ENCODE measurements at regions of chr3 and their contacts with region 1.

Region 1: DNA sequence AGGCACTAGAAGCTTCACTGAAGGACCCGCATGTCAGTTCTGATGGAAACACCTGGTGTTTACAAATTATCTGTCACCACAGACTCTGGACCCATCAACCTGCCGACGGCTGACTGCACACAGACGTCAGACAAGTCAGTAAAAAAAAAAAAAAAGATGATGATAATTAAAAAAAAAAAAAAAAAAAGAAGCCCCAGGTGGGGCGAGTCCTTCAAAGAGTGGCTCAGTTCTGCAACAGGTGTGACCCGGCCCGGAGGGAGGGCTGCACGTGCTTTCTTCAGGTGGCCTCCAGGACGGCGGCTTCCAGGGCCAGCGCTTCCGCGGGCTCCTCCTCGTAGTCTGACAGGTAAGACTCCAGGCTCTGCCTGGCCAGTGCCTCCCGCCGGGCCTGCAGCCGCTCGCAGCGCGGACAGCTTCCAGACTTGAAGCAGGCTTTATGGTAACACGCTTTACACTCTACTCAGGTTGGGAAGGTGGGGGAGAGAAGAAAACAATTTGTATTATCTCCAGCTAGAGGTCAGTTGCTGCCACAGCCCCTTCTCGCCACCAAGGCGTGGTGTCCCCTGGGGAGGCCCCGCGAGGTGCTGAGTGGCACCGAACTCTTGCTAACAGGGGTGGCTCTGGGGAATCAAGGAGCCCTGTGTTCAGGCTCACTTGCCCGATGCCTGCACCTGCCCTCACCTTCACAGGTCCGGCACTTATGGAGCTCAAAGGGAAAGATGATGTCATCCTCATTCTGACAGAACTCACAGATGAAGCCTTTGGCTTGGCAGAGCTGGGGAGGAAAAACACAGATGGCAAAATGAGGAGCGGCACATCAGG is 61.8 kb downstream of the RUBCN start:
- DNase-seq: peak in 1 of 2 donors; percentile 66
- ATAC-seq: no peak
- H3K4me3 ChIP-seq: no peak overlapping the region
- H3K27ac ChIP-seq: no peak overlapping the region
- H3K4me1 ChIP-seq: no peaks in the 10 kb centered on the region
- H3K27me3 ChIP-seq: no peaks in the 10 kb centered on the region

Region 2: GRCh38 chr3:197151569-197151968 is 523.4 kb before region 1 on chr3:
- intact Hi-C with region 1: no loop called
- DNase-seq: no peak
- ATAC-seq: peak; percentile 60
- H3K4me3 ChIP-seq: no peak overlapping the region
- H3K27ac ChIP-seq: no peak overlapping the region
- H3K4me1 ChIP-seq: no peaks in the 10 kb centered on the region
- H3K27me3 ChIP-seq: no peaks in the 10 kb centered on the region

Region 3: DNA sequence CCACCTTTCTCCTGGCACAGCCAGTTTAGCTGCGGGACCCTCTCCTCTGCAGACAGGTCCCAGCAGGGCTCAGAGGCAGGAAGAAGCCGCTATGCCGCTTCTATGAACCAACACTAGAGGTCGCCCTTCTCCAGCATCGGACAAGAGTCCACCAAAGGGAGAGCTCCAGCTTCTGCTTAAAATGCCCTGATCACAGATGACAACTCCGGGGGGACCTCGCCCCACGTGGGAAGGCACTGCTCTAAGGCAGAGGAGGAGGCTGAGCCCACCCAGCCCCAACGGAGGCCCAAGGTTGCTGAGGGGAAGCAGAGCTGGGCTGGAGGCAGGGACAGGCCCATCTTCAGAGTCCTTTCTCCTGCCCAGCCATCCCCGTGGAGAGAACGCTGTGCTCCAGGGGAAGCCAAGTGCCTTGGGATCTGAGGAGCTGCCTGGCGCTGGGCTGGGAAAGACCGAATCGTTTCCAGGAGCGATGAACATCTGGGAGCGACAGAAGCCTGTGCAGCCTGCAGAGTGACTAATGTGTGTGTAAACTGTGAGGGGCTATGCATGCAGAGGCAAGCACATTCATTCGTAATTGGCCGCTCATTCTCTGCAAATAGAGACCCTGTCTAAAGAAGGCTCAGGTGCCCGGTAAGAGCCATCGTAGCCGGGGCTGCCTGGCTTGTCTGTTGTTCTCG is 75.7 kb before region 1 on chr3:
- intact Hi-C with region 1: loop called in 1 of 2 experiments (anchors 10 kb)
- DNase-seq: peak; percentile 80 to 89
- ATAC-seq: peak; percentile 91
- H3K4me3 ChIP-seq: no peak overlapping the region
- H3K27ac ChIP-seq: no peak overlapping the region
- H3K4me1 ChIP-seq: no peaks in the 10 kb centered on the region
- H3K27me3 ChIP-seq: no peaks in the 10 kb centered on the region

Region 4: GRCh38 chr3:197711973-197712707 is 37.2 kb after region 1 on chr3:
- intact Hi-C with region 1: no loop called
- DNase-seq: peak; percentile 93 to 94
- ATAC-seq: peak; percentile 97
- H3K4me3 ChIP-seq: peak overlapping the region; percentile 61 to 82
- H3K27ac ChIP-seq: peak overlapping the region; percentile 99
- H3K4me1 ChIP-seq: peaks cover 0 to 2% of the 10 kb centered on the region in 2 donors
- H3K27me3 ChIP-seq: no peaks in the 10 kb centered on the region

Region 5: DNA sequence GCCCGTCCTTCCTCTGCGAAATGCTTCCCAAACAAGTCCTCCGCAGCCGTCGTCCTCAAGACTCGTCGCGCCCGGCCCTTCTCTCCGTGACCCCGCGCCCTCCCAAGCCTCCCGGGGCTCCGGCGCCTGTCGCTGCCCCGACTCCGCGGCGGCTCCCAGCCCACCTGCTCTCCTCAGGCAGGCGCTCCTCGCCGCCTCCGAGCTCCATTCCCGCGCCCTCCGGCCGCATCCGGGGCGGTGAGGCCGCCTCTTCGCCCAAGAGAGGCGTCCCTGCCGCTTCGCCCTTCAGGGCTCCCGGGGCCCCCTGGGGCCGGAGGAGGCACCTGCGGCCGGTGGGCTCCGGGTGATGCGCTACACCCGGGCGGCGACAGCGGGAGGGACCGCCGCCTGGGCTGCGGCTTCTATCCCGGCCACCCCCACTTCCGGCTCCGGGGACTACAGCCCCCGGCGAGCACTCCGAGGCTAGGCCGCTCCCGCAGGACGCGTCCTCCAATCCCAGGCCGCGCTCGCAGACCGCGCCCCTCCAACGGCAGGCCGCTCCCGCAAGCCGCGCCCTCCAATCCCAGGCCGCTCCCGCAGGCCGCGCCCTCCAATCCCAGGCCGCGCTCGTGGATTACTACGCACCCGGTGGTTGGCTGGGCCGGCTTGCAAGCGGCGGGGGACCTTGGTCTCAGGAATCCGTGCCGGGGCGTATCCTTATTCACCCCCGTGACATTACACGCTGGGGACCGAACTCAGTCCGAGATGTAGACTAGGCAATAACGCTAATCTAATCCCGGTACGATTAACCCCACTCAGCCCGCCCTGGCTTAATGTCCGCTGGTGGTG is 61.8 kb after region 1 on chr3 and contains the start of gene RUBCN:
- intact Hi-C with region 1: loop called in 1 of 2 experiments (anchors 5 kb)
- DNase-seq: peak; percentile 97 to 98
- ATAC-seq: peak; percentile 100
- H3K4me3 ChIP-seq: peak within 1 kb of the TSS; percentile 67 to 83
- H3K27ac ChIP-seq: peak within 1 kb of the TSS in 1 of 2 donors; percentile 80
- H3K4me1 ChIP-seq: no peaks in the 10 kb centered on the region
- H3K27me3 ChIP-seq: no peaks in the 10 kb centered on the region
- total RNA-seq, gene RUBCN: 38.2 to 41.1 TPM

Measured in aorta (tissue), 5 donors.